ENCODE measurements at regions of chr1 and their contacts with region 1.

Region 1: GRCh38 chr1:2875707-2876561 is 74.4 kb upstream of the TTC34 start:
- DNase-seq: peak; percentile 49
- ATAC-seq: peak; percentile 81
- H3K4me3 ChIP-seq: no peak overlapping the region
- H3K27ac ChIP-seq: no peak overlapping the region
- H3K4me1 ChIP-seq: no peaks in the 10 kb centered on the region
- H3K27me3 ChIP-seq: peaks cover 97% of the 10 kb centered on the region
- CTCF ChIP-seq: peak; percentile 75

Region 2: DNA sequence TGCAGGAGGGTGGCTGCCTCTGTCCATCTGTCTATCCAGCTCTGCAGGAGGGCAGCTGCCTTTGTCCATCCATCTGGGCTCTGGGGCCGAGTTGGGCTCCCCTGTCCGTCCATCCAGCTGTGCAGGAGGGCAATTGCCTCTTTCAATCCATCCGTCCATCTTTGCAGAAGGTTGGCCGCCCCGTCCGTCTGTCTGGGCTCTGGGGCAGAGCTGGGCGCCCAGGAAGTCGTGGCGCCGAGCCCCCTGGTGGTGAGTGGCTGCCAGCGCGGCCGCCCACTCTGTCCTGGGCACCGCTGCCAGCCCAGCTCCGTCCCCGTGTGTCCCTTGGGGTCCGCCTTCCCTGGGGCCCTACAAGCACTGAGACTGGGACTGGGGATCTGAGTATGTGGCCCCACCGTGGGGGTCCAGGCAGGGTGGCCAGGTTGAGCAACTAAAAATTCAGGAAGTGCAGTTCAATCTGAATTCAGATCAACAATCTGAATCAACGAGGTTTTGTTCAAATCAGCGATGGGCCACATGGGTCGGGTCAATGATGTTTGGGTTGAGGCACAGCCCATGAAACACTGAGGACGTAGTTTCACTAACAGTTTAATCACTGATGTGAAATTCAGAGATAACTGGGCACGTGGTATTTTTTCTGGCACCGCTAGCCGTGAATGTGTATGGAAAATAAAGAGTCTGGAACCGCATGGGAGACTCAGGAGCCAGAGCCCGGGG is 46.2 kb after region 1 on chr1:
- CTCF ChIA-PET with region 1: no interaction called
- POLR2A ChIA-PET with region 1: no interaction called
- intact Hi-C with region 1: loop called (anchors 2 kb)
- DNase-seq: peak; percentile 43
- ATAC-seq: peak; percentile 80
- H3K4me3 ChIP-seq: no peak overlapping the region
- H3K27ac ChIP-seq: no peak overlapping the region
- H3K4me1 ChIP-seq: no peaks in the 10 kb centered on the region
- H3K27me3 ChIP-seq: peaks cover 97% of the 10 kb centered on the region
- CTCF ChIP-seq: peak; percentile 92

Region 3: GRCh38 chr1:3423245-3423829 is 547.4 kb after region 1 on chr1:
- CTCF ChIA-PET with region 1: no interaction called
- POLR2A ChIA-PET with region 1: no interaction called
- intact Hi-C with region 1: loop called (anchors 1 kb)
- DNase-seq: no peak
- ATAC-seq: no peak
- H3K4me3 ChIP-seq: no peak overlapping the region
- H3K27ac ChIP-seq: no peak overlapping the region
- H3K4me1 ChIP-seq: peaks cover 15% of the 10 kb centered on the region
- H3K27me3 ChIP-seq: peaks cover 65% of the 10 kb centered on the region
- CTCF ChIP-seq: no peak

Region 4: GRCh38 chr1:3889936-3890335 is 1014.0 kb after region 1 on chr1:
- CTCF ChIA-PET with region 1: no interaction called
- POLR2A ChIA-PET with region 1: no interaction called
- intact Hi-C with region 1: no loop called
- DNase-seq: no peak
- ATAC-seq: no peak
- H3K4me3 ChIP-seq: no peak overlapping the region
- H3K27ac ChIP-seq: no peak overlapping the region
- H3K4me1 ChIP-seq: no peaks in the 10 kb centered on the region
- H3K27me3 ChIP-seq: no peaks in the 10 kb centered on the region
- CTCF ChIP-seq: no peak

Measured in PC-3 (cell line).